Esophagus muscularis mucosa (tissue), 4 donors: ENCODE measurements at regions of chr14 and their contacts with region 1.

Region 1: DNA sequence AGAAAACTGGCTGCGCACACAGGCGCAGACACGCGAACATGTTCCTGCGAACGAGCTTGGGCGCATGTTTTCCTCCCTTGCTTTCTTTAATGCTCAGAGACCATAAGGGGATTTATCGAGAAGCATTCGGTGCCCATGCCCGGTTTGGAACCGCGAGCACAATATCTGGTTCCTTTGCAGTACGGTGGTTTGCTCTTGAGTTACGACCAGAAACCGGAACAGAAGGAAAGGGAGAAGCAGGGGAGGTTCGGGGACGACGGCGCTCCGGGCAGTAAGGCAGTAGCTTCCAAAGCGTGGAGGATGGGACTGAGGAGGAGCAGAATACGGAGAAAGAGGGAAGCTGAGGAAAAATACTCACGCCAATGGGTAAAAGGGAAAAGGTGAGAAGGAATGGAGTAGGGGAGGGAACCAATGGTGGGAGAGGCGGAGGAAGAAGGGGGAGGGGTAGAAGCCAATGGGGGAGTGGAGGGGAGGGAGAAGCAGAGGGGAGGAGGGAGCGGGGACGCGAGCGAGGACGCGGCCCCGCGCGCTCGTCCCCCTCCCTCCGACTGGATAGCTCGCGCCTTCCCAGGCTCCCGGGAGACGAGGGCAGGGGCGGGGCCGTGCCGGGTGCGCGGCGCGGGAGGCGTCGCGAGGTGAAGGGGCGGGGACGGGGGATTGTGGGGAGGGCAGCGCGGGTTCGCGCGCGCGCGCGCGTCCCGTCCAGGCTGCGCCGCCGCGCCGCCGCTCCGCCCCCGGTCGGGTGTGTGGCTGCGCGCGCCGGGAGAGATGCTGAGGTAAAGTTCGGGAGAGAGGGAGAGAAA is 625 bp upstream of the ARHGAP5 start:
- DNase-seq: peak; percentile 97
- H3K4me3 ChIP-seq: peak overlapping the region; percentile 73 to 100 (median 88)
- H3K27ac ChIP-seq: peak overlapping the region; percentile 98 to 100 (median 100)
- H3K4me1 ChIP-seq: peaks cover 7 to 63% (median 57%) of the 10 kb centered on the region in 4 donors
- H3K27me3 ChIP-seq: no peaks in the 10 kb centered on the region
- CTCF ChIP-seq: no peak
- EP300 ChIP-seq: no peak
- POLR2A ChIP-seq: peak; percentile 53

Region 2: DNA sequence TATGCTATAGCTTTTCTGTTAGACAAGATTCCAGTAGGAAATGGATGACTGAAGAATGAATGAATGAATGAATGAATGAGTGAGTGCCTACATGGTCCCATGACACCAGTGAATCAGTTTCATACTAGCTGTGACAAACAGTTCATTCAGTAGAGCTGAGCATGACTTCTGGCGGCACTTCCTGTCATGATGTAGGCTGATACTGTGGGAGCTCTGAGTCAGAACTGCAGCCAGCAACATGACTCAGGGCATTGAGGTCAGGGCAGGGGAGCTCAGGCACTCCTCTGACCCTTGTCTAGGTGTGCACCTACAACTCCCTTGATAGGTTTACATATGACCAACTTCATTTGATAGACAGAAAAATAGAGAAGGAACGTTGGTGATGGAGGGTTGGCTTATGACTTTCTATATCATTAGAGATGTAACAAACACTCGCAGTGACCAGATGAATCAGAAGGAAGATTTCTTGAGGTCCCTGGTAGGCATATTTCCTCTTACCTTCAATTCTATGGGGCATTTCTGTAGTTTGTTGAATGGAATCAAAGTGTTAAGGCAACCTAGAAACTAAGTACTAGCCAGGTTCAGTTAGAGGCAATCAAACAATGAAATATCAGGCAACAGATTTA is 138.6 kb before region 1 on chr14:
- intact Hi-C with region 1: loop called (anchors 10 kb)
- DNase-seq: no peak
- H3K4me3 ChIP-seq: no peak overlapping the region
- H3K27ac ChIP-seq: no peak overlapping the region
- H3K4me1 ChIP-seq: peaks cover 0 to 9% (median 7%) of the 10 kb centered on the region in 4 donors
- H3K27me3 ChIP-seq: no peaks in the 10 kb centered on the region
- CTCF ChIP-seq: no peak
- EP300 ChIP-seq: no peak
- POLR2A ChIP-seq: no peak

Region 3: GRCh38 chr14:32028599-32028998 is 47.9 kb before region 1 on chr14:
- intact Hi-C with region 1: no loop called
- DNase-seq: no peak
- H3K4me3 ChIP-seq: no peak overlapping the region
- H3K27ac ChIP-seq: no peak overlapping the region
- H3K4me1 ChIP-seq: peaks cover 0 to 7% (median 3%) of the 10 kb centered on the region in 4 donors
- H3K27me3 ChIP-seq: no peaks in the 10 kb centered on the region
- CTCF ChIP-seq: no peak
- EP300 ChIP-seq: no peak
- POLR2A ChIP-seq: no peak

Region 4: DNA sequence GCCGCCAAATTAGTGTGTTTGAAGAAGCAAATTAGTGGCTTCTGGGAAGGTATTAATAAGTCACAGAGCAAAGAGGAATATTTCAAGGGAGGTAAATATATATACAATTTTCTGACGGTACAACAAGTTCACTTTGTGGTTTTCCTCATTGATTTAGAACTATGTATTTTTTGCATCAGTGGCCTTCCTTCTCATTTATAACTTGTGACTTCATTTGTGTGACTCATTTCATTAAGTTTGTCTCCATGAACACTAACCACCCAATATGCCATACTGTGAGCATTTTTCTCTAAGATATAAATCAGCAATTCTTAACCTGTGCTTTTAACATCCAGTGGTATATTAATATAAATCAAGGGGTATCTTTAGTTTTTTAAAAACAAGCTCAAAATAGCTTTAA is 28.7 kb before region 1 on chr14:
- intact Hi-C with region 1: no loop called
- DNase-seq: no peak
- H3K4me3 ChIP-seq: no peak overlapping the region
- H3K27ac ChIP-seq: no peak overlapping the region
- H3K4me1 ChIP-seq: no peaks in the 10 kb centered on the region
- H3K27me3 ChIP-seq: no peaks in the 10 kb centered on the region
- CTCF ChIP-seq: no peak
- EP300 ChIP-seq: no peak
- POLR2A ChIP-seq: no peak

Region 5: GRCh38 chr14:32142341-32142740 is 65.9 kb after region 1 on chr14:
- intact Hi-C with region 1: no loop called
- DNase-seq: no peak
- H3K4me3 ChIP-seq: no peak overlapping the region
- H3K27ac ChIP-seq: no peak overlapping the region
- H3K4me1 ChIP-seq: peaks cover 0 to 6% (median 2%) of the 10 kb centered on the region in 4 donors
- H3K27me3 ChIP-seq: no peaks in the 10 kb centered on the region
- CTCF ChIP-seq: no peak
- EP300 ChIP-seq: no peak
- POLR2A ChIP-seq: no peak

Region 6: GRCh38 chr14:32202998-32203882 is 126.8 kb after region 1 on chr14 and contains the start of gene RNU6-8:
- intact Hi-C with region 1: loop called (anchors 2 kb)
- DNase-seq: peak; percentile 95
- H3K4me3 ChIP-seq: peak within 1 kb of the TSS; percentile 57 to 80 (median 69)
- H3K27ac ChIP-seq: peak within 1 kb of the TSS; percentile 82 to 89 (median 85)
- H3K4me1 ChIP-seq: peaks cover 9 to 23% (median 19%) of the 10 kb centered on the region in 4 donors
- H3K27me3 ChIP-seq: no peaks in the 10 kb centered on the region
- CTCF ChIP-seq: no peak
- EP300 ChIP-seq: no peak
- POLR2A ChIP-seq: peak; percentile 50
- total RNA-seq, gene RNU6-8: not detected

Region 7: DNA sequence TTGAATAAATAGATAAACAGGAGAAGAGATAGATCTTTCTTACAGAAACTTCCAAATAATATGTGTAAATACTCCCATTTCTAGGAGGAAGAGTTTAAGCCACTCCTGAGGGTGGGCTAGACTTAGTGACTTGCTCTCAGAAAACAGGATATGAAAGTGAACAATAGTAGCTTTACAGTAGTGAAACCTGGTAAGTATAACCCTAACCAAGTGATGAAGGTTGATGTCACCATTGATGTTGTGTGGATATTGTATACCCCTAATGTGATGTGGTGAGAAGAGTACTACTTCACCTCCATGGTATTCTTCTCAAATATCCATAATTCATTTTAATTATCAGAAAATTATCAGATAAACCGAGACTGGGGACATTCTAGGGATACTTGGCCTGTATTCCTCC is 273.5 kb after region 1 on chr14:
- intact Hi-C with region 1: no loop called
- DNase-seq: no peak
- H3K4me3 ChIP-seq: no peak overlapping the region
- H3K27ac ChIP-seq: no peak overlapping the region
- H3K4me1 ChIP-seq: no peaks in the 10 kb centered on the region
- H3K27me3 ChIP-seq: no peaks in the 10 kb centered on the region
- CTCF ChIP-seq: no peak
- EP300 ChIP-seq: no peak
- POLR2A ChIP-seq: no peak

Region 8: GRCh38 chr14:32469388-32470160 is 393.1 kb after region 1 on chr14:
- intact Hi-C with region 1: loop called (anchors 5 kb)
- DNase-seq: no peak
- H3K4me3 ChIP-seq: no peak overlapping the region
- H3K27ac ChIP-seq: peak overlapping the region; percentile 73 to 84 (median 77)
- H3K4me1 ChIP-seq: peaks cover 41 to 68% (median 63%) of the 10 kb centered on the region in 4 donors
- H3K27me3 ChIP-seq: no peaks in the 10 kb centered on the region
- CTCF ChIP-seq: peak; percentile 50 to 65 (median 61)
- EP300 ChIP-seq: no peak
- POLR2A ChIP-seq: no peak